Activated naive CD4-positive, alpha-beta T cell treated with anti-CD3 and anti-CD28 coated beads for 36 hours (primary cell): ENCODE measurements at regions of chr10 and their contacts with region 1.

Region 1: GRCh38 chr10:6151087-6151977 is 51.4 kb upstream of the PFKFB3 start:
- DNase-seq: peak; percentile 71
- H3K4me3 Mint-ChIP-seq: peak overlapping the region; percentile 46
- H3K27ac Mint-ChIP-seq: peak overlapping the region; percentile 33
- H3K4me1 Mint-ChIP-seq: peaks cover 53% of the 10 kb centered on the region
- H3K27me3 Mint-ChIP-seq: no peaks in the 10 kb centered on the region

Region 2: DNA sequence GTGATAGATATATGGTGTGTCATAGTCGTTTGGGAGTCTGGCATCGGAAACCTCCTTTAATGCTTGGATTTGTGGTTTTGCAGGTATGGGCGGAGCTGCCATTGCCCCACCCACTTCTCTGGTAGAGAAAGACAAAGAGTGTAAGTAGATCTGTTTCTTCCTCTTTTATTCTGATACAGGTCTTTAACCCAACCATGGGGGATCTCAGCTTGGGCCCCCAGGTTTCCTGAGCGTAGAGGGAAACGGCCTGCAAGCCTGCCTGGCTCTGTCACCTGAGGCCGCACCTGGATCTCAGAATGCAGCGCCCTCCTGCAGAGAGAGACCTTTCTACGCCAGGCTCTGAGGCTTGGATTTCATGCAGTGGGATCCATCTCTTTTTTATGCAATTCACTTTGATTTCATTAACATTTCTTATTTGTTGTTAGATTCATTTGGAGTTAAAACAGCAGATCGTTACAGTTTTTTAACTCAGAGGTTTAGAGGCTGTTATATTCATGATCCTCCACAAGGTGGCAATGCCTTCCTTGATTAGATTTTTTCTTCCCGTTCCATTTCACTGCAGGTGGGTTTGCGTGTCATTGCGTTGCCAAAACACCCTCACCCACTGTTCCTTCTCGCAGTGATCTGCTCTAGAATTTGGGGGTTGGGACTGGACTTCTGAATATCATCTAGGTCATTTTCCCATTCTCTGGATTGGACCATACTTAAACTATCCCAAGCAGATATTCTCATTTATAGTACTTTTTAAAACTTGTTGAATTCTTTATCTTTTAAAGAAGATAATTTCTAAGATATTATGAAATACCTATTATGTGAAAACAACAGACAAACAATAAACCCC is 42.5 kb before region 1 on chr10:
- CTCF ChIA-PET with region 1: interaction called, 35 read pairs
- intact Hi-C with region 1: loop called (anchors 1 kb)
- DNase-seq: peak; percentile 36
- H3K4me3 Mint-ChIP-seq: no peak overlapping the region
- H3K27ac Mint-ChIP-seq: peak overlapping the region; percentile 66
- H3K4me1 Mint-ChIP-seq: peaks cover 21% of the 10 kb centered on the region
- H3K27me3 Mint-ChIP-seq: no peaks in the 10 kb centered on the region

Region 3: DNA sequence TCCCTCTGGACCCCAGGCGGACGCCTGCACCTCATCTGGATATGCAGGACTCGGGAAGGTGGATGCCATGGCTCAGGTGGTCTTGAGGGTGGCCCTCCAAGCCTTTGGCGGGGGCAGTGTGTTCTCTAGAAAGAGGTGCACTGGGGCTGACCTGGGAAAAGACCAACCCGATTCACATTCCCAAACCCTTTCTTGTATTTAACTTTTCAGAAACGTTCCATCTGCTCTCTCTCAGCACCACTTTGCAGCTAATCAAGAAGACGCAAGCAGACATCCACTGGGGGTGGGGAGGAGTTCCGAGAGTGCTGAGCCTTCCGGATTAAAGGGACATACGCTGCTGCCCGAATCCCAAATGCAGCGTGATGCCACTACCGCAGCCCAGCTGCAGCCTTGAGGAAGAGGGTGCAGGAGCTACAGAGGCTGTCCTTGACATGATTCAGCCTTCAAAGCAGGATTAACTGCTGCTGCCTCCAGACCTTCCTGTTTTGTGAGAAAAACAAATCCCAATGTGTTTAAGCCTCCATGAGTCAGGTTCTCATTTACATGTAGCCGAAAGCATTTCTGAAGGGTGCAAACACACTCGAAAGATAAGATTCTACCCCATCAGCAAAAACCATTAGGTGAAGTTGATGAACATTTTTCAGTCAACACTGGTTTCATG is 22.6 kb before region 1 on chr10:
- CTCF ChIA-PET with region 1: interaction called, 10 read pairs
- intact Hi-C with region 1: no loop called
- DNase-seq: no peak
- H3K4me3 Mint-ChIP-seq: no peak overlapping the region
- H3K27ac Mint-ChIP-seq: peak overlapping the region; percentile 89
- H3K4me1 Mint-ChIP-seq: peaks cover 41% of the 10 kb centered on the region
- H3K27me3 Mint-ChIP-seq: peaks cover 3% of the 10 kb centered on the region

Region 4: GRCh38 chr10:6163364-6164270 is 12.3 kb after region 1 on chr10:
- CTCF ChIA-PET with region 1: interaction called, 11 read pairs
- intact Hi-C with region 1: no loop called
- DNase-seq: peak; percentile 92
- H3K4me3 Mint-ChIP-seq: peak overlapping the region; percentile 98
- H3K27ac Mint-ChIP-seq: peak overlapping the region; percentile 94
- H3K4me1 Mint-ChIP-seq: peaks cover 57% of the 10 kb centered on the region
- H3K27me3 Mint-ChIP-seq: no peaks in the 10 kb centered on the region

Region 5: DNA sequence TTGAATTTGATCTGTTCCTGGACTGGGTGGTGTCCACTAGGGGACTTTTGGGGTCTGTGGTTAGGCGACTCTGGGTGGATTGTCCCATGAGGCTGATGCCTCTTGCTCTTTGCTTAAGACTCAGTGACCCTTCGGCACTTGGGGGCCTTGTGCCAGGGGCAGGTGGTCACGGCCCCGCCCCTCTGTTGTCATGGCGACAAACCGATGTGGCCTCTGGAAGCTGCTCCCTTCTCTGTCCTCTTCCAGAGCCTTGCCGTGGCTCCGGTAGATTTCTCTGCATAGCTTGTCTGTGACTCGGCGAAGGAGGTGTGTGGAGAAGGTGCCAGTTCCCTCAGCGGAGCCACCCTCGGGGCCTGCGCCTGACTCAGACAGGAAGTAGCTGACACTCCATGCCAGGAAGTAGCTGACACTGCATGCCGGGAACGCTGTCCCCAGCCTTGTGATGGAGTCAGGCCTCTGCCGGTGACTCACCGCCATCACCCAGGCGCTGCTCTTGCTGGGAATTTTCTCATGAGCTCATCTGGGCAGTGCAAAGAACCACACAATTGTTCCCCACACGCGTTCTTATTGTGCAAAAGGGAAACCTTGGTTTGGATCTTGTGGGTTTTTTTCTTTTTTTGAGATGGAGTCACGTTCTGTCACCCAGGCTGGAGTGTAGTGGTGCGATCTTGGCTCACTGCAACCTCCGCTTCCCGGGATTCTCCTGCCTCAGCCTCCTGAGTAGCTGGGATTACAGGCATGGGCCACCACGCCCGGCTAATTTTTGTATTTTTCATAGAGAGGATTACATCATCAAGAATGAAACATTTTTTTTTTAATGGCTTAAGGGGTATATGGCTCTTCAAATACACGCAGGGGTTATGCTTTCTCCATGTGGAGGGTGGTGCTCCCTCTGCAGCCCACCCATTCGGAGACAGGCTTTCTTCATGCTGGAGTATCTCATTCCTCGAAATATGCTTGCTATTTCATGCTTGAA is 124.0 kb after region 1 on chr10:
- CTCF ChIA-PET with region 1: no interaction called
- intact Hi-C with region 1: no loop called
- DNase-seq: peak; percentile 98
- H3K4me3 Mint-ChIP-seq: peak overlapping the region; percentile 60
- H3K27ac Mint-ChIP-seq: peak overlapping the region; percentile 94
- H3K4me1 Mint-ChIP-seq: peaks cover 50% of the 10 kb centered on the region
- H3K27me3 Mint-ChIP-seq: no peaks in the 10 kb centered on the region